Ovary (tissue), 10 donors: ENCODE measurements at regions of chr9 and their contacts with region 1.

Region 1: GRCh38 chr9:20382460-20383071 is 239.7 kb downstream of the MLLT3 start:
- DNase-seq: no peak
- H3K4me3 ChIP-seq: no peak overlapping the region
- H3K27ac ChIP-seq: no peak overlapping the region
- H3K4me1 ChIP-seq: no peaks in the 10 kb centered on the region
- H3K27me3 ChIP-seq: no peaks in the 10 kb centered on the region
- CTCF ChIP-seq: no peak
- EP300 ChIP-seq: no peak
- POLR2A ChIP-seq: no peak

Region 2: DNA sequence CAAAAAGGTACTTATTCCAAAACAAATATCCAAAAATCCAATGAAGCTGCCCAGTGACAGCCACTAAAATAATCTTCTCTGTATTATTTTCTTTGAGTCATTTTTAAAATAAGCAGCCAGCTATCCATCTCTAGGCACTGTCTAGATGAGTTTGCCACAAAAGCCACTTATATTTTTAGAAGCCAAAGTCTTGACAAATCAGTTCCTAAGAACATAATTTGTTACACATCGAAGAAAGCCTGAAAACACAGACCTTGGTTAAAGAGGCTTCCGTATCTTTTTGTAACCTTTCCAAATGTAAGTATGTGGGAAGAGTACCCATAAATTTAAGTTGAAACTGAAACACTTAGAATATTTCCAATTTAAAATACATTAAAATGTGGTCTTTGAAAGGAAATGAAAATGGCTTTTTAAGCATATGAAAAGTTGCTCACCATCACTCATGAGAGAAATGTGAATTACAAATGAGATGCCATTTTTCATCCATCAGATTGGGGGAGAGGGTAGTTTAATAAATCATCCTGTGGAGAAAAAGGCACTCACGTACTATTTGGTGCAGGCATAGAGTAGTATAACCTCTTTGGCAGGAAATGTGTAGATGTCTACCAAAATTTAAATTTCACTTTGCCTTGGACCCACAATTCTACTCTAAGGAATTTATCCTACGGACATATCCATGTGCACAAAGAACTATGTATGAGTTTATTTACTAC is 59.3 kb after region 1 on chr9:
- intact Hi-C with region 1: loop called in 1 of 4 experiments (anchors 10 kb)
- DNase-seq: no peak
- H3K4me3 ChIP-seq: no peak overlapping the region
- H3K27ac ChIP-seq: no peak overlapping the region
- H3K4me1 ChIP-seq: no peaks in the 10 kb centered on the region
- H3K27me3 ChIP-seq: no peaks in the 10 kb centered on the region
- CTCF ChIP-seq: no peak
- EP300 ChIP-seq: no peak
- POLR2A ChIP-seq: no peak